ENCODE measurements at regions of chr7 and their contacts with region 1.

Region 1: DNA sequence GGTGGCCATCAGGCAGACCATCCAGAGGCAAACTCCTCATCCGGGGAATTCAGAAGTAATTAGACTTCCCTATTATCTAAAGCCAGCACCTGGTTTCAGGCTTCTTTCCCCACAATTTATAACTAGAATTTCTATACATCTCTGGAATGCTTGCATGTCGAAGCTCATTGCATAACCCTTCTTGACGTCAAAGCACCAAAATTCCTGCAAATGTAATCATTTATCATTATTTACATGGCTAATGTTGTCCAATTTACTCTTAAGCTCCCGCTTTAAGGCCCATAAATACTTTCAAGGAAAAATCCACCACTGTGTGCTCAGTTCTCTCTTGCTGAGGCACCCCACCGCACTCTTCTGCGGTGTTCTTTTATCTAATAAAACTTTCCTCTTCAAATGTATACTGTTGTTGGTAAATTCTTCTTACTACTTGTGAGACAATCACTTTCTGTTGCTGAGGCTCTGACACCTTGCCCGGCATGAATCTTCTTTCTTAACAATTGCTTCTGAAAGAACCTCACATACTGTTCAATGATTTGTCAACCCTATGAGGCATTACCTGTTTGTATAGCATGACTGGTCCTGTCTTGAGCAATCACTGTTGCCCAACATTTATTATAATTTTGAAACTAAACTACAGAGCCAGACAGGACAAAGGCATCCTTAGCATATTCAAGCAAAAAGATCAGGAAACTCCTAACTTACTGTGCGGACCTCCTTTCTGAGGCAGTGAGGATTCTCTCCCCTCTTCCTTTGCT is 17.4 kb upstream of the GPR141 start:
- DNase-seq: peak; percentile 39
- H3K4me3 ChIP-seq: no peak overlapping the region
- H3K27ac ChIP-seq: no peak overlapping the region
- H3K4me1 ChIP-seq: no peaks in the 10 kb centered on the region
- H3K27me3 ChIP-seq: no peaks in the 10 kb centered on the region
- CTCF ChIP-seq: no peak

Region 2: GRCh38 chr7:37701769-37702168 is 35.6 kb after region 1 on chr7:
- CTCF ChIA-PET with region 1: no interaction called
- dilution Hi-C with region 1: no loop called
- in situ Hi-C with region 1: no loop called
- intact Hi-C with region 1: loop called (anchors 1 kb)
- DNase-seq: no peak
- H3K4me3 ChIP-seq: no peak overlapping the region
- H3K27ac ChIP-seq: no peak overlapping the region
- H3K4me1 ChIP-seq: no peaks in the 10 kb centered on the region
- H3K27me3 ChIP-seq: no peaks in the 10 kb centered on the region
- CTCF ChIP-seq: no peak

Measured in mammary epithelial cell (primary cell).